ENCODE measurements at regions of chr9 and their contacts with region 1.

Region 1: GRCh38 chr9:96854073-96854876 is at the start of gene ZNF782:
- DNase-seq: peak; percentile 96
- H3K4me3 Mint-ChIP-seq: peak within 1 kb of the TSS; percentile 87
- H3K27ac Mint-ChIP-seq: peak within 1 kb of the TSS; percentile 94
- H3K4me1 Mint-ChIP-seq: peaks cover 25% of the 10 kb centered on the region
- H3K27me3 Mint-ChIP-seq: no peaks in the 10 kb centered on the region
- CTCF ChIP-seq: no peak
- total RNA-seq, gene ZNF782: 5.2 and 6.0 TPM in 2 replicates

Region 2: GRCh38 chr9:96758845-96759673 is 95.2 kb before region 1 on chr9:
- CTCF ChIA-PET with region 1: no interaction called
- POLR2A ChIA-PET with region 1: no interaction called
- intact Hi-C with region 1: no loop called
- DNase-seq: peak; percentile 6
- H3K4me3 Mint-ChIP-seq: no peak overlapping the region
- H3K27ac Mint-ChIP-seq: no peak overlapping the region
- H3K4me1 Mint-ChIP-seq: no peaks in the 10 kb centered on the region
- H3K27me3 Mint-ChIP-seq: no peaks in the 10 kb centered on the region
- CTCF ChIP-seq: no peak

Region 3: DNA sequence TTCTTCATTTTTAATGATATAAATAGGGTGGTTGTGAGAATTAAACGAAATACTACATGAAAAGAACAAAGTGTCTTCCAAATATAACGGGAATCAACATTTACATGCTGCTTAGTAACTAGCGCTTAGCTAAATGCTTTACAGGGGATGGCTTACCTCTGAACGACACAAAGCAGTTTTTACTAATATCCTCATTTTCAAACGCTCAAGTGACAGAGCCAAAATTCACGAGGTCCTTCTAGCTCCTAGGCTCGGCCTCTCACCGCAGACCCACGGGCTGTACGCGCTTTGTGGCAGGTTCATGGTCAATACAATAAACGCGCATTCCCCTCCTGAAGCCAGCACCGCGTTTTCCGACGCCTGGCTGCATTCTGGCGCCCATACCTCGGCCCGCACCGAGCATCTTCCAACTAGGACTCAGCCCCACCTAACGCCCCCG is 76.8 kb before region 1 on chr9:
- CTCF ChIA-PET with region 1: no interaction called
- POLR2A ChIA-PET with region 1: interaction called, 10 read pairs
- intact Hi-C with region 1: no loop called
- DNase-seq: no peak
- H3K4me3 Mint-ChIP-seq: peak overlapping the region; percentile 96
- H3K27ac Mint-ChIP-seq: peak overlapping the region; percentile 96
- H3K4me1 Mint-ChIP-seq: no peaks in the 10 kb centered on the region
- H3K27me3 Mint-ChIP-seq: no peaks in the 10 kb centered on the region
- CTCF ChIP-seq: no peak

Region 4: GRCh38 chr9:97109194-97109811 is 255.0 kb after region 1 on chr9:
- CTCF ChIA-PET with region 1: interaction called, 34 read pairs
- POLR2A ChIA-PET with region 1: interaction called, 5 read pairs
- intact Hi-C with region 1: loop called (anchors 1 kb)
- DNase-seq: peak; percentile 74
- H3K4me3 Mint-ChIP-seq: no peak overlapping the region
- H3K27ac Mint-ChIP-seq: no peak overlapping the region
- H3K4me1 Mint-ChIP-seq: peaks cover 12% of the 10 kb centered on the region
- H3K27me3 Mint-ChIP-seq: no peaks in the 10 kb centered on the region
- CTCF ChIP-seq: peak; percentile 74

Region 5: GRCh38 chr9:97386733-97387503 is 532.6 kb after region 1 on chr9:
- CTCF ChIA-PET with region 1: interaction called, 4 read pairs
- POLR2A ChIA-PET with region 1: interaction called, 3 read pairs
- intact Hi-C with region 1: loop called (anchors 2 kb)
- DNase-seq: peak; percentile 73
- H3K4me3 Mint-ChIP-seq: no peak overlapping the region
- H3K27ac Mint-ChIP-seq: no peak overlapping the region
- H3K4me1 Mint-ChIP-seq: no peaks in the 10 kb centered on the region
- H3K27me3 Mint-ChIP-seq: no peaks in the 10 kb centered on the region
- CTCF ChIP-seq: peak; percentile 98